ENCODE measurements at regions of chr10 and their contacts with region 1.

Region 1: DNA sequence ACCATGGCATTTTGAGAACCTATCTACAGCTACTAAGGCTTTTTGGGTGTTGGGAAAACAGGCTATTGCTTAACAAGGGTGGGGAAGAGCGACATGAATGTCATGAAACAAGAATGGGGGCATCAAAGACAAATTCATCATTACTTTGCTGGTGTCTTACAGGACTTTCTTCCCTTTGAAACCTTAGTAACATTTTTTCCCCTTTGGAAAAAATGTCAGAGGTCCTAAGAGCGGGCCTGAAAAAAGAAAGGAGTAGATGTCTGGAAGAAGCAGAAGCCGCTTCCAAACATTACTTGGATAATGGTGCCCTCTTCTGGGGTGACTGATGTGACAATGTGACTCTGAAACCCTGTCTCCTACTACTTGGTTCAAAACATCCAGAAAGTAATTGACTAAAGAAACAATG is 3.8 kb upstream of the DDX50 start:
- DNase-seq: no peak
- H3K4me3 ChIP-seq: no peak overlapping the region
- H3K27me3 ChIP-seq: no peaks in the 10 kb centered on the region
- CTCF ChIP-seq: peak; percentile 57

Region 2: GRCh38 chr10:68800196-68800595 is 97.1 kb before region 1 on chr10:
- CTCF ChIA-PET with region 1: interaction called, 13 read pairs
- POLR2A ChIA-PET with region 1: no interaction called
- DNase-seq: peak; percentile 11
- H3K4me3 ChIP-seq: no peak overlapping the region
- H3K27me3 ChIP-seq: no peaks in the 10 kb centered on the region
- CTCF ChIP-seq: no peak

Measured in BJ (cell line).